IMR-90 (cell line): ENCODE measurements at regions of chr1 and their contacts with region 1.

Region 1: GRCh38 chr1:55904541-55904940 is 674.8 kb downstream of the PLPP3 start:
- DNase-seq: no peak
- ATAC-seq: no peak
- H3K4me3 ChIP-seq: no peak overlapping the region
- H3K27ac ChIP-seq: no peak overlapping the region
- H3K4me1 ChIP-seq: no peaks in the 10 kb centered on the region
- H3K27me3 ChIP-seq: no peaks in the 10 kb centered on the region
- CTCF ChIP-seq: no peak
- POLR2A ChIP-seq: no peak
- RAD21 ChIP-seq: no peak

Region 2: GRCh38 chr1:55888685-55889317 is 15.7 kb before region 1 on chr1:
- CTCF ChIA-PET with region 1: no interaction called
- POLR2A ChIA-PET with region 1: no interaction called
- dilution Hi-C with region 1: no loop called
- in situ Hi-C with region 1: no loop called
- intact Hi-C with region 1: loop called (anchors 1 kb)
- DNase-seq: no peak
- ATAC-seq: no peak
- H3K4me3 ChIP-seq: no peak overlapping the region
- H3K27ac ChIP-seq: no peak overlapping the region
- H3K4me1 ChIP-seq: peaks cover 2% of the 10 kb centered on the region; the same call in 1 of the 2 replicates
- H3K27me3 ChIP-seq: no peaks in the 10 kb centered on the region
- CTCF ChIP-seq: no peak
- POLR2A ChIP-seq: no peak
- RAD21 ChIP-seq: no peak

Region 3: DNA sequence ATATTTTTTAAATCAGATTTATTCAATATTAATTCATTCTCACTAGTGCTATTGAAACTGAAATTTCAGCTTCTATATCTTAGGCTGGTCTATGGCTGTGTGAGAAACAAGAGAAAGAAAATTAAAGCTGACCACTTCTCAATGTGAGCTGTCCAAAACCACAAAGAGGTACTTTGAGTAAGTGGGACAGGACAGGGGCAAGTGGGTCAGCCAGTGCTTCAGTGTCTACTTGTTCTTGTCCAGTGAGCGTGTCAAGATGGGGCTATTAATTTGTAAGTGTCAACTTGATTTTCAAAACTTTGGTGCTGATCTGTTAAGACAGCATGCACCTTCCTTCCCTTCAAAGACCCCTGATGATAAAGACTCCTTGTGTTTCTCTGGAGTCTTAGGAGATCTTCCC is 140.9 kb after region 1 on chr1:
- CTCF ChIA-PET with region 1: no interaction called
- POLR2A ChIA-PET with region 1: no interaction called
- dilution Hi-C with region 1: no loop called
- in situ Hi-C with region 1: no loop called
- intact Hi-C with region 1: no loop called
- DNase-seq: no peak
- ATAC-seq: no peak
- H3K4me3 ChIP-seq: no peak overlapping the region
- H3K27ac ChIP-seq: no peak overlapping the region
- H3K4me1 ChIP-seq: no peaks in the 10 kb centered on the region
- H3K27me3 ChIP-seq: no peaks in the 10 kb centered on the region; the same call in none of the 2 replicates
- CTCF ChIP-seq: no peak
- POLR2A ChIP-seq: no peak
- RAD21 ChIP-seq: no peak